HEK293 (cell line): ENCODE measurements at regions of chr9 and their contacts with region 1.

Region 1: GRCh38 chr9:124392871-124393460 is 22.3 kb downstream of the PSMB7 start:
- H3K4me3 ChIP-seq: no peak overlapping the region
- H3K27ac ChIP-seq: no peak overlapping the region
- H3K4me1 ChIP-seq: peaks cover 15% of the 10 kb centered on the region
- CTCF ChIP-seq: no peak

Region 2: GRCh38 chr9:124126571-124127289 is 266.2 kb before region 1 on chr9:
- CTCF ChIA-PET with region 1: interaction called, 17 read pairs
- POLR2A ChIA-PET with region 1: no interaction called
- H3K4me3 ChIP-seq: no peak overlapping the region
- H3K27ac ChIP-seq: no peak overlapping the region
- H3K4me1 ChIP-seq: no peaks in the 10 kb centered on the region
- CTCF ChIP-seq: peak; percentile 60; the same call in 1 of the 2 replicates

Region 3: DNA sequence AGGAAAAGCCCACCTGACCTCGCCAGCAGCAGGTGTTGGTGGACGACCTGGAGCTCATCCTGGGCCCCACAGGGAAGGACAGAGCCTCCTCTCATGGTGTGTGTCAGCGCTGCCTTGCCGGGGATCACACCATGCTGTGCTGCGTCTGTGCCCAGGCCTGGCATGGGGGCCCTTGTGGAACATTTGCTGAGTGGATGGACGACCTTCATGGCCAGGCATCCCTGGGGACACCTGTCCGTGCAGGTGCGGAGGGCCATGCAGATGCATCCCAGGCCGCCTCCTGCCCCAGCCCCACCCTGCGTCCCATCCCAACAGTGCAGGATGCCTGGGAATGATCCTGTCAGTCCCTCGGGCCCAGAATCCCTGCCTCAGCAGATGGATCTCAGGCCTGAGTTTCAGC is 61.4 kb before region 1 on chr9:
- CTCF ChIA-PET with region 1: no interaction called
- POLR2A ChIA-PET with region 1: no interaction called
- H3K4me3 ChIP-seq: no peak overlapping the region
- H3K27ac ChIP-seq: no peak overlapping the region
- H3K4me1 ChIP-seq: no peaks in the 10 kb centered on the region
- CTCF ChIP-seq: no peak

Region 4: GRCh38 chr9:124410321-124410913 is 17.5 kb after region 1 on chr9:
- CTCF ChIA-PET with region 1: interaction called, 26 read pairs
- POLR2A ChIA-PET with region 1: no interaction called
- H3K4me3 ChIP-seq: no peak overlapping the region
- H3K27ac ChIP-seq: no peak overlapping the region
- H3K4me1 ChIP-seq: peaks cover 4% of the 10 kb centered on the region; the same call in 1 of the 2 replicates
- CTCF ChIP-seq: no peak